ENCODE measurements at regions of chr10 and their contacts with region 1.

Region 1: GRCh38 chr10:101782811-101783735 is at the start of gene NPM3:
- DNase-seq: peak; percentile 54 to 88 (median 83)
- ATAC-seq: peak; percentile 80
- H3K4me3 ChIP-seq: peak within 1 kb of the TSS; percentile 81 to 87
- H3K4me3 Mint-ChIP-seq: peak within 1 kb of the TSS; percentile 100
- H3K27ac ChIP-seq: peak within 1 kb of the TSS; percentile 64 to 81
- H3K27ac Mint-ChIP-seq: peak within 1 kb of the TSS; percentile 97
- H3K4me1 ChIP-seq: peaks cover 53% of the 10 kb centered on the region
- H3K4me1 Mint-ChIP-seq: peaks cover 71% of the 10 kb centered on the region
- H3K27me3 ChIP-seq: peaks cover 13 to 20% of the 10 kb centered on the region in 2 experiments
- H3K27me3 Mint-ChIP-seq: peaks cover 6% of the 10 kb centered on the region
- CTCF ChIP-seq: no peak
- total RNA-seq, gene NPM3: 21.1 to 25.1 TPM

Region 2: GRCh38 chr10:101587725-101588653 is 195.1 kb before region 1 on chr10 and contains the starts of genes DPCD and POLL:
- CTCF ChIA-PET with region 1: interaction called, 5 read pairs
- POLR2A ChIA-PET with region 1: no interaction called
- intact Hi-C with region 1: loop called in 1 of 2 experiments (anchors 5 kb)
- DNase-seq: peak; percentile 77 to 94 (median 91)
- ATAC-seq: peak; percentile 91
- H3K4me3 ChIP-seq: peak within 1 kb of the TSS; percentile 98
- H3K4me3 Mint-ChIP-seq: peak within 1 kb of the TSS; percentile 94
- H3K27ac ChIP-seq: peak within 1 kb of the TSS; percentile 69 to 72
- H3K27ac Mint-ChIP-seq: peak within 1 kb of the TSS; percentile 90
- H3K4me1 ChIP-seq: peaks cover 19% of the 10 kb centered on the region
- H3K4me1 Mint-ChIP-seq: peaks cover 25% of the 10 kb centered on the region
- H3K27me3 ChIP-seq: no peaks in the 10 kb centered on the region
- H3K27me3 Mint-ChIP-seq: no peaks in the 10 kb centered on the region
- CTCF ChIP-seq: no peak
- total RNA-seq, gene DPCD: 1.0 TPM in 1 of 2 experiments, not detected in the other
- total RNA-seq, gene POLL: 19.9 to 23.0 TPM

Region 3: GRCh38 chr10:101797403-101798059 is 14.5 kb after region 1 on chr10:
- CTCF ChIA-PET with region 1: interaction called, 28 read pairs
- POLR2A ChIA-PET with region 1: interaction called, 3 read pairs
- intact Hi-C with region 1: no loop called
- DNase-seq: no peak
- ATAC-seq: no peak
- H3K4me3 ChIP-seq: no peak overlapping the region
- H3K4me3 Mint-ChIP-seq: no peak overlapping the region
- H3K27ac ChIP-seq: no peak overlapping the region
- H3K27ac Mint-ChIP-seq: peak overlapping the region; percentile 11
- H3K4me1 ChIP-seq: no peaks in the 10 kb centered on the region
- H3K4me1 Mint-ChIP-seq: peaks cover 38% of the 10 kb centered on the region
- H3K27me3 ChIP-seq: no peaks in the 10 kb centered on the region
- H3K27me3 Mint-ChIP-seq: no peaks in the 10 kb centered on the region
- CTCF ChIP-seq: no peak

Region 4: DNA sequence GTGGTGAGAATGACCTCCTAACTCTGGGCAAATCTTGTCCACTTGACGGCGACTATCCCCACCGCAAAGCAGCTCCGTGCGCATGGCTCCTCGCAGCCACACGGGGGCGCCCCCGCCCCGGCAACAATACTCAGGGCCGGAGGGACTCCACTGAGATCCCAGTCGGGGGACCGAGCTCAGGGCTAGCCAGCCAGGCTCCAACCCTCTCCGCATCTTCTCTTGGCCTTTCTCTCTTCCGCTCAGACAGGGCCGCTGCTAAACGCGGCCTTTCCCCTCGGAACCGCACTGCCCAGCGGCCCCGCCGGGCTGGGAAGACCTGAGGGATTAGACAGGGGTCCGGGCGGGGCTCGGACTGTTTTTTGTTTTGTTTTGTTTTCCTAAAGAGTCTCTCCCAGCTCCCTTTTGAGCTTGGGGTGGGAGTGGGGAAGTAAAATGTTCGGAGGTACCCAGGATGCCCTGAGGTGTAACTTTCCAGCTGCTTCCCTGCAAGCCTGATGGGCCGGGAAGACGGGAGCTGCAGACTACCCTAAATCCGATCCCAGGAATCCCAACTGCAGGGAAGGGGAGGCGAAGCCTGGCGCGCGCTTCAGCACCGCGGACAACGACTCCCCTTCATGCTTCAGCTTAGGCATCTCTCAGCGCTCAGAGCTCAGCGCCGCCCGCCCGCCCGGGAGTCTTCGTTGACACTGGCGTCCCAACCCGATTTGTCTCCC is 57.8 kb after region 1 on chr10:
- CTCF ChIA-PET with region 1: interaction called, 14 read pairs
- POLR2A ChIA-PET with region 1: interaction called, 4 read pairs
- intact Hi-C with region 1: loop called in 1 of 2 experiments (anchors 2 kb)
- DNase-seq: peak; percentile 39 to 82 (median 72)
- ATAC-seq: peak; percentile 44
- H3K4me3 ChIP-seq: peak overlapping the region; percentile 47 to 48
- H3K4me3 Mint-ChIP-seq: peak overlapping the region; percentile 84
- H3K27ac ChIP-seq: no peak overlapping the region
- H3K27ac Mint-ChIP-seq: no peak overlapping the region
- H3K4me1 ChIP-seq: peaks cover 38% of the 10 kb centered on the region
- H3K4me1 Mint-ChIP-seq: peaks cover 48% of the 10 kb centered on the region
- H3K27me3 ChIP-seq: no peaks in the 10 kb centered on the region
- H3K27me3 Mint-ChIP-seq: peaks cover 8% of the 10 kb centered on the region
- CTCF ChIP-seq: peak; percentile 84

Region 5: DNA sequence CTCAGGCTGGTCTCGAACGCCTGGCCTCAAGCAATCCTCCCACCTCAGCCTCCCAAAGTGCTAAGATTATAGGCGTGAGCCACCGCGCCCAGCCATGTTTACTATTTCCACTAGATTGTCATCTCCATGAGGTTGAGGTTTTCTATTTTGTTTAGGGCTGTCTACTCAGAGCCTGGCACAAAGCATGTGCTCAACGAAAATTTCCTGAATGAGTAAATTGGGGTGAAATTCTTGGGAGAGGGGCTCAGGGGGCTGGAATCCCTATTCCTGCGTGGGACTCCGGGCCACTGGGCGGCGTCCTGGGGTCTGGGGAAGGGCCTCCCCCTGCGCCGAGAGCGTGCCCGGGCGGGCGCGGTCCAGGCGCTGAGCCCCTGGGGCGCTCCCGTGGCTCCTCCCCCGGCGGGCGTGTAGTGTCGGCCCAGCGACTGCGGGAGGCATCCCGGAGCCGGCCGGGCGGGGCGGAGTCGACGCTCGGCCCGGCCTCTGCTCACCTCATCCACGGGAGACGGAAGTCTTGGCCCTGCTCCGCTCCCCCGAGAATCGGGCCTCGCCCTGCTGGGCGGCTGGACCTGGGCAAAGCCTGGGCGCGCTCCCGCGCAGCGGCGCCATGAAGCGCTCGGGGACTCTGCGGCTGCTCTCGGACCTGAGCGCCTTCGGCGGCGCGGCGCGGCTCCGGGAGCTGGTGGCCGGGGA is 281.9 kb after region 1 on chr10 and contains the start of gene HPS6:
- CTCF ChIA-PET with region 1: no interaction called
- POLR2A ChIA-PET with region 1: no interaction called
- intact Hi-C with region 1: loop called in 1 of 2 experiments (anchors 2 kb)
- DNase-seq: peak; percentile 69 to 94 (median 89)
- ATAC-seq: peak; percentile 98
- H3K4me3 ChIP-seq: peak within 1 kb of the TSS; percentile 57 to 97
- H3K4me3 Mint-ChIP-seq: peak within 1 kb of the TSS; percentile 87
- H3K27ac ChIP-seq: peak within 1 kb of the TSS; percentile 66 to 85
- H3K27ac Mint-ChIP-seq: peak within 1 kb of the TSS; percentile 93
- H3K4me1 ChIP-seq: peaks cover 21% of the 10 kb centered on the region
- H3K4me1 Mint-ChIP-seq: peaks cover 28% of the 10 kb centered on the region
- H3K27me3 ChIP-seq: no peaks in the 10 kb centered on the region
- H3K27me3 Mint-ChIP-seq: no peaks in the 10 kb centered on the region
- CTCF ChIP-seq: no peak
- total RNA-seq, gene HPS6: 17.5 to 18.1 TPM

Measured in CD8-positive, alpha-beta T cell (primary cell).